ENCODE measurements at regions of chr9 and their contacts with region 1.

Region 1: DNA sequence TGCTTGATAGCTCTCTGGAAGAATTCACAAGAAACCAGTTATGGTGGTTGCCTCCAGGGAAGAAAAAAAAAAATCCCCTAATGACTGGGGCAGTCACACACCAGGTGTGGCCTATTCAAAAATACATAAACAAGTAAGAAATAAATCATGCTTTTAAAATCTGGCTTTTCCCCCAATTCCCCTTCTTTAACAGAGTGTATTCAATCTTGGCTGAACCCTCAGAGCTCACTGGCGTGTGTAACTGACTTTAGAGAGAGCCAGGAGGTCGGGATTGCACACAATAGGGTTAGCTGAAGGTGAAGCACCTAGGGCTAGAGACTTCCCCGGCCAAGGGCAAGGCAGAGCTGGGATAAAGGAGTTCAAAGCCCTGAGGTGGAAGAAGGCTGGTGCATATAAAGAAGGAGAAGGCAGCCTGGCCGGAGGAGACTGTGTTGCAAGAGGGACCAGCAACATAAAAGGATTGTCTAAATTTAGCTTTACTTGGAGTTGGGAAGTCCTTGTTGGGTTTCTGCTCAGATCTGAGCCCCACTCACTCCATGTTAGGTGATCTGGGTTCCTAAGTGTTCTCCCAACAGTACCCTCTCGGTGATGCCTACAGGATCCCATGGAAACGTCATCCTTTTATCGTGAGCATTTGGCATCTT is 19.7 kb downstream of the FNBP1 start:
- DNase-seq: no peak
- H3K4me3 ChIP-seq: no peak overlapping the region
- H3K4me3 Mint-ChIP-seq: peak overlapping the region in 7 of 8 donors; percentile 11 to 70 (median 59)
- H3K27ac ChIP-seq: peak overlapping the region; percentile 39
- H3K27ac Mint-ChIP-seq: peak overlapping the region; percentile 73 to 95 (median 87)
- H3K4me1 ChIP-seq: peaks cover 92% of the 10 kb centered on the region
- H3K4me1 Mint-ChIP-seq: peaks cover 67 to 96% (median 79%) of the 10 kb centered on the region in 4 donors
- H3K27me3 ChIP-seq: no peaks in the 10 kb centered on the region
- H3K27me3 Mint-ChIP-seq: no peaks in the 10 kb centered on the region

Region 2: DNA sequence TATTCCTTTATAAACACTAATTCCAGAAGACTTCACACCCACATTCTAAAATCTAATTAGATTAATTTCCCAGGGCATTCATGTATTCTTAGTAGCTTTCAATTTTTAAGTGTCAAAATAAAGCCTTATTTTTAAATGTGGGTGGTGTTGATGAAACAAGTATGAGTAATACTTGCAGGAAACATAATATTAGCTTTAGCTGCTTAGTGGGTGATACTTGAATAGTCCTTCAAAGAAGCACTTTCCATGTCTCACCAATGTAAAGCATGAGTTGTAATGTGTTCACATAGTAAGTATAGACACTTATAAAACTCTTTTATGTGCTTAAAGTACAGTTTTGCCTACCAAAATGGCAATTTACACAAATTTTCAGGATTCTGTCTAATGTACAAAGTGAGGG is 12.8 kb after region 1 on chr9:
- CTCF ChIA-PET with region 1: interaction called, 8 read pairs
- POLR2A ChIA-PET with region 1: interaction called, 83 read pairs
- intact Hi-C with region 1: loop called (anchors 2 kb)
- DNase-seq: no peak
- H3K4me3 ChIP-seq: no peak overlapping the region
- H3K4me3 Mint-ChIP-seq: peak overlapping the region; percentile 66 to 100 (median 99)
- H3K27ac ChIP-seq: peak overlapping the region; percentile 38
- H3K27ac Mint-ChIP-seq: peak overlapping the region; percentile 86 to 99 (median 98)
- H3K4me1 ChIP-seq: peaks cover 79% of the 10 kb centered on the region
- H3K4me1 Mint-ChIP-seq: peaks cover 60 to 88% (median 74%) of the 10 kb centered on the region in 4 donors
- H3K27me3 ChIP-seq: no peaks in the 10 kb centered on the region
- H3K27me3 Mint-ChIP-seq: no peaks in the 10 kb centered on the region

Region 3: DNA sequence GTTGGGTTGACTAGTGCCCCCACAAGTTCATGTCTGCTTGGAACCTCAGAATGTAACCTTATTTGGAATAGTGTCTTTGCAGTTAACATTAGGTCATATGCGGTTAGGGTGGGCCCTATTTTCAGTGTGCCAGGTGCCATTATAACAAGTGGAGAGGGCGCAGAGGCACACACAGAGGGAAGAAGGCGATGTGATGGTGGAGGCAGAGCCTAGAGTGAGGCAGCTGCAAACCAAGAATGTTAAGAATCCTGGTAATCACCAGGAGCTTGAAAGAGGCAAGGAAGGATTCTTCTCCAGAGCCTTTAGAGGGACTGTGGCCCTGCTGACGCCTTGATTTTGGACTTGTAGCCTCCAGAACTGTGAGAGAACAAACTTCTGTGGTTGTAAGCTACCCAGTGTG is 41.4 kb after region 1 on chr9:
- CTCF ChIA-PET with region 1: no interaction called
- POLR2A ChIA-PET with region 1: no interaction called
- intact Hi-C with region 1: no loop called
- DNase-seq: no peak
- H3K4me3 ChIP-seq: no peak overlapping the region
- H3K4me3 Mint-ChIP-seq: no peak overlapping the region
- H3K27ac ChIP-seq: no peak overlapping the region
- H3K27ac Mint-ChIP-seq: peak overlapping the region in 2 of 7 donors; percentile 1 to 47
- H3K4me1 ChIP-seq: peaks cover 8% of the 10 kb centered on the region
- H3K4me1 Mint-ChIP-seq: peaks cover 28 to 41% (median 33%) of the 10 kb centered on the region in 4 donors
- H3K27me3 ChIP-seq: no peaks in the 10 kb centered on the region
- H3K27me3 Mint-ChIP-seq: no peaks in the 10 kb centered on the region

Measured in CD4-positive, alpha-beta memory T cell (primary cell).